Right ventricle myocardium inferior (tissue), 1 donor: ENCODE measurements at regions of chr14 and their contacts with region 1.

Region 1: GRCh38 chr14:63543000-63543825 is at the start of gene PPP2R5E:
- DNase-seq: peak; percentile 99
- ATAC-seq: peak; percentile 99
- total RNA-seq, gene PPP2R5E: 36.3 TPM

Region 2: DNA sequence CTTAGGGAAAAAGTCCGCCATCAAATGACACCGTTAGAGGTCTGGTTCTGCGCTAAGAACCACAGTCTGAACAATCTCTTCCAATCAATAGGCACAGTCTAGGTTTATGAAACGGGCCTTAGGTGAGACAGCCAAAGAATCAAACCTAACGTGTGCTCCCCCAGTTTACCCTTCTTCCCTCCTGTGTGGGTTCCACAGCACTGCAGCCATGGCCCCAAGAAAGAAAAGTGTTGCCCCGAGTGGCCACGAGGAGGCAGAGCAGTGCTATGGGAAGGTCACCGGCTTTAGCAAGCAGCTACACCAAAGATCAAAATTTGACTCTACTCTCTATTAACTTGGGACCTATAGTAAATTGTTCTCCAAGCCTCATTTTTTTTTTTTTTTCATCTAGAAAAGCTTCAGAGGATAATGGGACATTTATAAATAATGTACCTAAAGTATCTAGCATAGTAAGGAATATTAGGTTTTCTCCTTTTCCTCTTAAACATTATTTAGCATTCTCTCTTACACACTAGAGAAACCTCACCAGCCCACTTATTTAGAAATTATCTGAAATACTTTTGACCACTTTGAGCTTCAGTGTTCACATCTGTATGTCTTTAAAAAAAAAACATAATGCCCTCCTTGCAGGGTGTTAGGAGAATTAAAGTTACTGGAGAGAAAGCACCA is 154.3 kb before region 1 on chr14:
- intact Hi-C with region 1: loop called (anchors 1 kb)
- DNase-seq: no peak
- ATAC-seq: peak; percentile 76

Region 3: DNA sequence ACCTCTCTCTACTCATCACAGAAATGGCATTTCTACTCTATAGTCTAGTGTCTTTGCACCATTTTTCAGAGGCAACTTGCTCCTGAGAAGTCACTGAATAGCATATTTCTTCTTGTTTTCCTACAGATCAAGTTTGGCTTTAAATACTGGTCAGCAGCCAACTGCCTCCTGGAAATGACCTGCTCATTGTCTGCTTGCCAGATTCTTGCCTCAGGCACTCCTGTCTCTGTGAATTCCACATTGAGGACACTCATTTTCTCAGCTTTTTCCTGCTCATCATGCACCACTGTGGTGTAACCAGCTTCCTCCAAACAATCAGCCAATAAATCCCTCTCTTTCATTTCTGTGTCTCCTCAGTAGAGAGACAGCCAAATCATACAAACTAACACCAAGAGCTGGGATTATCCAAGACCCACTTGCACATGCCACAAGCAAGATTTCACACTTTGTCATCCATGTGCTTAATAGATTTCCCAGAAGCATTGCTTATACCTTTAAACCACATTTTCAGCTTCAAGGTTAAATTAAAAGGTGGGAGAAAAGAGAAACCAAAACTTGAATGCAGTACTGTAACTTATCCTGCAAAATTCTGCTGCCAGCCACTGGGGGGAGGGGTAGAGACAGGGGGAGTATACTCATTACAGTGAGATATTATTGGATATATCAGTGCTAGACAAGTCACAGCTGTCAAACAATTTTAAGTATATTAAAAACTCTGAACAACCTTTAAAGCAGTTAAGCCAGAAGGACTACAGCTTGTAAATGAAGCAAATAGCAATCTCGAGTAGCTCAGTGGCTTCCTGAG is 105.1 kb before region 1 on chr14:
- intact Hi-C with region 1: loop called (anchors 2 kb)
- DNase-seq: no peak
- ATAC-seq: peak; percentile 65

Region 4: GRCh38 chr14:63499701-63500250 is 43.4 kb before region 1 on chr14:
- intact Hi-C with region 1: loop called (anchors 5 kb)
- DNase-seq: no peak
- ATAC-seq: peak; percentile 47

Region 5: GRCh38 chr14:63641473-63642228 is 98.4 kb after region 1 on chr14 and contains the start of gene WDR89:
- intact Hi-C with region 1: loop called (anchors 1 kb)
- DNase-seq: peak; percentile 98
- ATAC-seq: peak; percentile 99
- total RNA-seq, gene WDR89: 6.6 TPM